ENCODE measurements at regions of chr6 and their contacts with region 1.

Region 1: GRCh38 chr6:72084992-72085569 is 198.7 kb downstream of the RIMS1 start:
- DNase-seq: no peak
- ATAC-seq: no peak

Region 2: GRCh38 chr6:71544028-71544427 is 541.1 kb before region 1 on chr6:
- intact Hi-C with region 1: loop called (anchors 10 kb)
- DNase-seq: no peak
- ATAC-seq: no peak

Region 3: GRCh38 chr6:71766146-71766760 is 318.8 kb before region 1 on chr6:
- intact Hi-C with region 1: no loop called
- DNase-seq: no peak
- ATAC-seq: no peak

Region 4: GRCh38 chr6:72286911-72287311 is 201.8 kb after region 1 on chr6:
- intact Hi-C with region 1: no loop called
- DNase-seq: no peak
- ATAC-seq: no peak

Measured in left ventricle myocardium superior (tissue), 1 donor.